Activated CD4-positive, alpha-beta T cell treated with anti-CD3 and anti-CD28 coated beads for 36 hours (primary cell): ENCODE measurements at regions of chrX and their contacts with region 1.

Region 1: GRCh38 chrX:49269010-49269767 is 404 bp upstream of the PPP1R3F start:
- DNase-seq: peak; percentile 97
- ATAC-seq: peak; percentile 80
- H3K4me3 Mint-ChIP-seq: peak overlapping the region; percentile 78
- H3K27ac Mint-ChIP-seq: peak overlapping the region; percentile 98
- H3K4me1 Mint-ChIP-seq: peaks cover 50% of the 10 kb centered on the region
- H3K27me3 Mint-ChIP-seq: no peaks in the 10 kb centered on the region

Region 2: GRCh38 chrX:48696301-48697181 is 572.6 kb before region 1 on chrX and contains the start of gene SUV39H1:
- CTCF ChIA-PET with region 1: no interaction called
- POLR2A ChIA-PET with region 1: no interaction called
- intact Hi-C with region 1: loop called in 1 of 2 experiments (anchors 5 kb)
- DNase-seq: peak; percentile 92
- ATAC-seq: peak; percentile 94
- H3K4me3 Mint-ChIP-seq: peak within 1 kb of the TSS; percentile 91
- H3K27ac Mint-ChIP-seq: peak within 1 kb of the TSS; percentile 92
- H3K4me1 Mint-ChIP-seq: peaks cover 19% of the 10 kb centered on the region
- H3K27me3 Mint-ChIP-seq: no peaks in the 10 kb centered on the region
- total RNA-seq, gene SUV39H1: 30.8 to 31.7 TPM

Region 3: DNA sequence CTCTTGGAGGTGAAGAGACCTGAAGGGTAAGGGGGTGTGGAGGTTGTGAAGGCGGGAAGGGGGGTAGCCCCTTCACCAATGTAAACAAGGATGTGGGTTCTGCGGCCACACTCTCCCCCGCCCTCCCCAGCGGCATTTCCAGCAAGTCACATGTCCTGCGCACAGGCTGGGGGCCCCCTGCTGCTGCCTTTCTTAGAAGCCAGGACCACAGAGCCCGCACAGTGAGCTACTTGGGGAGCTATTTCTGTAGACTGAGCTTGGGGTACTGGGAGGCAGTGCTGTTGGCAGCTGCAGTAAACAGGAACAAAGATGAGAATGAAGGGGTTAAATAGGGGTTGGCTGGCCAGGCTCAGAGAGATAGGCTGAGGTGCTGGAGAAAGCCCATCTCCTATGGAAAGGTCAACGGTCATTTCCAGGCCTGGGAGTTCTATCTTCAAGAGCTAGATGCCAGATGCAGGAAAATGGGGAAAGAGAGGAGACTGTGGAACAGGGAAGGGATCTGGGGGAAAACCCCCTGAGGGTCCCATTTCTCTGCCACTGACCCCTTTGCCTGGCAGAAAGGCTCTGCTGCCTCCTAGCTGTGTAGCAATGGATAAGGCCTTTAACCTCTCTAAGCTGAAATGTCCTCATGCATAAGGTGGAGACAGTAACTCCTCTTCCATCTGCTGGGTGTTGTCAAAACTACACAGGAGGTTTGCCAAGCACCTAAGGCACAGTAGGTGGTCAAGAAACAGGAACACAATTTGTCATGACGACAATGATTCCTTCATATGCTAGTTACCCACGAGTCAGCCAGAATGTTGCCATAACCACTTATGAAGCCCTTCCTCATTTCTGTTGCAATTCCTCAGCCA is 331.9 kb before region 1 on chrX:
- CTCF ChIA-PET with region 1: no interaction called
- POLR2A ChIA-PET with region 1: interaction called, 7 read pairs
- intact Hi-C with region 1: loop called in 1 of 2 experiments (anchors 5 kb)
- DNase-seq: peak; percentile 93
- ATAC-seq: peak; percentile 61
- H3K4me3 Mint-ChIP-seq: peak overlapping the region; percentile 64
- H3K27ac Mint-ChIP-seq: peak overlapping the region; percentile 96
- H3K4me1 Mint-ChIP-seq: peaks cover 81% of the 10 kb centered on the region
- H3K27me3 Mint-ChIP-seq: no peaks in the 10 kb centered on the region

Region 4: GRCh38 chrX:49043220-49043986 is 225.8 kb before region 1 on chrX and contains the start of gene TFE3:
- CTCF ChIA-PET with region 1: no interaction called
- POLR2A ChIA-PET with region 1: no interaction called
- intact Hi-C with region 1: loop called in 1 of 2 experiments (anchors 1 kb)
- DNase-seq: peak; percentile 97
- ATAC-seq: peak; percentile 91
- H3K4me3 Mint-ChIP-seq: peak within 1 kb of the TSS; percentile 93
- H3K27ac Mint-ChIP-seq: peak within 1 kb of the TSS; percentile 94
- H3K4me1 Mint-ChIP-seq: peaks cover 41% of the 10 kb centered on the region
- H3K27me3 Mint-ChIP-seq: no peaks in the 10 kb centered on the region
- total RNA-seq, gene TFE3: 27.1 to 27.5 TPM

Region 5: GRCh38 chrX:49053223-49054072 is 215.7 kb before region 1 on chrX:
- CTCF ChIA-PET with region 1: no interaction called
- POLR2A ChIA-PET with region 1: no interaction called
- intact Hi-C with region 1: no loop called
- DNase-seq: peak; percentile 78
- ATAC-seq: peak; percentile 84
- H3K4me3 Mint-ChIP-seq: peak overlapping the region; percentile 74
- H3K27ac Mint-ChIP-seq: peak overlapping the region; percentile 84
- H3K4me1 Mint-ChIP-seq: peaks cover 34% of the 10 kb centered on the region
- H3K27me3 Mint-ChIP-seq: no peaks in the 10 kb centered on the region

Region 6: DNA sequence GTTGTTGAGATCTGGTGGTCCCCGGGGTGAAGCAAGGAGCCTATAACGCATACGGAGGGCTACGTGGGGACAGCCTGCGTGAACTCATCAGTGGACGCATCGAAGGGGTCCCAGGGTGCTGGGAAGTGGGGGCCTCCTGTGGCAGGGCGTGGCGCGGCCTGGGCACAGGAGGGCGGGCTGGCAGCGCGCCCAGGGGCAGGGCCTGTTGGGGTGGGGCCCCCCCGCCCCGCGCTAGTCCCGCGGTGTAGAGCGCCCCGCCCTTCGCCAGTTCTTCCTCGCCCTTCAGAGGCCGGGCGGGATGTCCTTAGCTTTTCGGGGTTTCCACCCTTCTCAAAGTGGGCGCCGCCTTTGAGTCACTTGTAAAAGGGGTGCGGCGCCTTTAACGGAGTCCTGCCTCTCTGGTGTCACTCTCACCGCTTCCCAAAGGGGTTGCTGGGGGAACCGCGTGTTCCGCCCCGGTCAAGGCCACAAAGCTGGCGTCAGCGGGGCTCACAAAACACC is 96.9 kb before region 1 on chrX:
- CTCF ChIA-PET with region 1: no interaction called
- POLR2A ChIA-PET with region 1: no interaction called
- intact Hi-C with region 1: loop called in 1 of 2 experiments (anchors 1 kb)
- DNase-seq: peak; percentile 85
- ATAC-seq: peak; percentile 78
- H3K4me3 Mint-ChIP-seq: peak overlapping the region; percentile 88
- H3K27ac Mint-ChIP-seq: peak overlapping the region; percentile 93
- H3K4me1 Mint-ChIP-seq: peaks cover 31% of the 10 kb centered on the region
- H3K27me3 Mint-ChIP-seq: no peaks in the 10 kb centered on the region

Region 7: DNA sequence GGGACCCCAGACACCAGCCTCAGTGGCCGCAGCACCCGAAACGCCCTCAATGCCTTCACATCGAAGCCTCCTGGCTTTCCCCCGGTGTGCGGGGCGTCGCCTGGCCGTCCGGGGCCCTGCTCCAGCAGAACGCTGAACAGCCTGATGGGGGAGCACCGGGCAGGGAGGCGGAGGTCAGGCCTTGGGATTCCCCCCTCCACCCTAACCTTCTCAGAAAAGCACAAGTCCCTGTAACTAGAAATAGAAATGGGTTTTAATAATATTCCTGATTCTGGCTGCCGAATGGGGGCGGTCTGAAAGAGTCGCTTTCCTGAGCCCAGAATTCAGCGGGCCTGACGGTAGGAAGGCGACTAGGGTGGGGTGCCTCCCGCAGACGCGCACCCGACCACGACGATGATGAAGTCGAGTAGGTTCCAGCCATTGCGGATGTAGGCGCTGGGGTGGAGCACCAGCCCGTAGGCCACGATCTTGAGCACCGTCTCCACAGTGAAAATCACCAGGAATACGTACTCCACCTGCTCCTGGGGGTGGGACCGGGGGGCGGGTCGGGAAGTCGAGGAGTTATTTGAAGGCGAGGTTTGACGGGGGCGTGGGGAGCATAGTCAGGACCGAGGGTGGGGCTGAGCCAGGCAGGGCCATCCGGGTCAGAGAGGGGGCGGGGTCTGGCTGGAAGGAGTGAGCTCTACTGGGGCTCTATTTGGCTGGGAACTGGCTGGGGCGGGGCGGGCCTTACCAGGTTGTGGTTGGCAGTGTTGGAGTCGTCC is 38.5 kb before region 1 on chrX:
- CTCF ChIA-PET with region 1: no interaction called
- POLR2A ChIA-PET with region 1: no interaction called
- intact Hi-C with region 1: loop called (anchors 1 kb)
- DNase-seq: peak; percentile 81
- ATAC-seq: peak; percentile 77
- H3K4me3 Mint-ChIP-seq: peak overlapping the region; percentile 72
- H3K27ac Mint-ChIP-seq: peak overlapping the region; percentile 85
- H3K4me1 Mint-ChIP-seq: peaks cover 14% of the 10 kb centered on the region
- H3K27me3 Mint-ChIP-seq: no peaks in the 10 kb centered on the region

Region 8: GRCh38 chrX:50469206-50469605 is 1200.0 kb after region 1 on chrX:
- CTCF ChIA-PET with region 1: no interaction called
- POLR2A ChIA-PET with region 1: no interaction called
- intact Hi-C with region 1: no loop called
- DNase-seq: no peak
- ATAC-seq: no peak
- H3K4me3 Mint-ChIP-seq: no peak overlapping the region
- H3K27ac Mint-ChIP-seq: no peak overlapping the region
- H3K4me1 Mint-ChIP-seq: peaks cover 3% of the 10 kb centered on the region
- H3K27me3 Mint-ChIP-seq: peaks cover 33% of the 10 kb centered on the region